ENCODE measurements at regions of chr1 and their contacts with region 1.

Region 1: DNA sequence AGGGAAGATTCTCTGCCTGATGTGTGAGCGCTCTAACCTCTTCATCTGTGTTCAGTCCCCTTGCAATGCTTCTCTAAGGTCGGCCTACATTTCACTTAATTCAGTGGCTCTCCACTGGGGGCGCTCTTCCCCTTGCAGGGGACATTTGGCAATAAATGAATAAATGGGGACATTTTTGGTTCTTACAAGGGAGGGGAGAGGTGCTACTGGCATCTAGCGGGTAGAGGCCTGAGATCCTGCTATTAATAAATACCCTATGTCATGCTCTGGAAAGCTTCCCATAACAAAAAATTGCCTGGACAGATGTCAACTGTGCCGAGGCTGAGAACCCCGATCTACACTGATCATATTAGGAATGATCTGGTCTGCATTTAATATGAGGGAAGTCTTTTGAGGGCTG is 25.9 kb upstream of the DNAJC11 start:
- DNase-seq: peak; percentile 56
- ATAC-seq: peak; percentile 59 to 80
- H3K4me3 ChIP-seq: no peak overlapping the region
- H3K27ac ChIP-seq: no peak overlapping the region
- H3K4me1 ChIP-seq: no peaks in the 10 kb centered on the region
- H3K27me3 ChIP-seq: no peaks in the 10 kb centered on the region
- CTCF ChIP-seq: peak; percentile 82

Region 2: DNA sequence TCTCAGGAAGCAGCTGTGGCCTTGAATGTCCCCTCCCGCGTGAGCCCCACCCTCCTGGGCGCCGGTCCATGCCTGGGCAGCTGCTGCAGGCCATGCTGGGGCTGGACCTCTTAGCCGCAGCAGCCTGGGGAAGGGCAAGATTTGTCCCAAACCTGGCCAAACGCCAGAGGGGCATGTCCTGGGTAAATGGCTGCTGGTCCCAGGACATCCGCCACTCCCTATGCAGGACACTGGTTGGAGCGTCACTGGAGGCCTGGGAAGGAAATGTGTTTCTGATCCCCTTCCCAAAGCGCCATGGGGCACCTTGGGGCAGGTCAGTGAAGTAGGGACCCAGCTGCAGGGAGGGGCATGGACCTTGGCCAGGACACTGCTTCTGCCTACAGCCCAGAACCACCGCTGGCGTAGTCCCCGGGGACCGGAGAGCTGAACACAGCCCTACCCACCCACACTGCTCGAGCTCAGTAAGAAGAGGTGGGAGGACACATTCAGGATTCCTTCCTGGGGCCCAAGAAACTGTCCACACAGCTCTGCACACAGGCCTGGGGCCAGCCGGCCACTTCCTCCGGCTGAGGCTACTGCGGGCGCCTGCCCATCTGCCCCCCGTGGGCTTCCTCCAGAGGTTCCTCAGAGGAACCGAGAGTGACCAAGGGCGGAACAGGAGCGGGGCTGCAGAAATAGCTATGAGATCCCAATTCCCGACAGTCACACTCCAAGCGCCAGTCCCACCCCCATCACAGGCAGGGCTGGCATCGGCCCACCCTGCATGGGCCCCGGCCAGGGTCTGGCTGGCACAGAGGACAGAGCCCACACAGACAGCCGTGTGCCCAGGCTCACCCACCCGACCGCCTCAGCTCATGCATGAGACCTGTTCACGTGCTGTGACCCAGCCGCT is 225.3 kb before region 1 on chr1:
- intact Hi-C with region 1: no loop called
- DNase-seq: no peak
- ATAC-seq: peak in 1 of 2 donors; percentile 23
- H3K4me3 ChIP-seq: no peak overlapping the region
- H3K27ac ChIP-seq: peak overlapping the region; percentile 18
- H3K4me1 ChIP-seq: peaks cover 23% of the 10 kb centered on the region
- H3K27me3 ChIP-seq: peaks cover 9% of the 10 kb centered on the region
- CTCF ChIP-seq: no peak

Region 3: DNA sequence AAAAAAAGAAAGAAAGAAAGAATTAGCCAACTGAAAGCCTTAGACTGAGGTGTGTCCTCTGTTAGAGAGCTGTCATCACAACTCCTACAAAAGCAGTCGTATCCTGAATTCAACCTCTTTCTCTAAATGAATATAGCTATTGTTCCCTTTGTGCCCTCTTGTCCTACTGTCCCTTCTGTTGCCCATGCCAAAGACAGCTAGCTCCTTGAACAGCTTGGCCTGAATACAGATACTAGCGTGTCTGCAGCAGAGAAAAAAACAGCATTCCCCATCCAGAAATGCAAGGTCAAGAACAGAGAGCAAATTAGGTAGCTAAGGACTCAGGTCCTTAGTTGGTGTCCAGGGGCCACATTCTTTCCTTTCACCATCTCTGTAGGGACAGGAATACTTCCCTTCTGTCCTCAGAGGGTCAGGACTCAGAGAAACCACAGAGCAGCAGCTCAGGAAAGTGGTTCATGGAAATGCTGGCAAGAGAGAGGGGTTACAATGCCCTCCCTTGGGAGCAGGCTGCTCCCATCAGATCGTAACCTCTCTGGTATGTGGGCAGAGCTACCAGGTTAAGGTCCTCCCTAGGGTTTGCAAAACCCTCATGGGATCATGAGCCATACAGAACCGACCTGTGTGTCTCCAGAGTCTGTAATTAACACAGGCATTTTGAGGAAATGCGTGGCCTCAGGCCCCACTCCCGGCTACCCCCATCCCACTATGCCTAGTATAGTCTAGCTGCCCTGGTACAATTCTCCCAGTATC is 149.5 kb before region 1 on chr1:
- intact Hi-C with region 1: no loop called
- DNase-seq: no peak
- ATAC-seq: no peak
- H3K4me3 ChIP-seq: no peak overlapping the region
- H3K27ac ChIP-seq: no peak overlapping the region
- H3K4me1 ChIP-seq: peaks cover 38% of the 10 kb centered on the region
- H3K27me3 ChIP-seq: no peaks in the 10 kb centered on the region
- CTCF ChIP-seq: no peak

Region 4: DNA sequence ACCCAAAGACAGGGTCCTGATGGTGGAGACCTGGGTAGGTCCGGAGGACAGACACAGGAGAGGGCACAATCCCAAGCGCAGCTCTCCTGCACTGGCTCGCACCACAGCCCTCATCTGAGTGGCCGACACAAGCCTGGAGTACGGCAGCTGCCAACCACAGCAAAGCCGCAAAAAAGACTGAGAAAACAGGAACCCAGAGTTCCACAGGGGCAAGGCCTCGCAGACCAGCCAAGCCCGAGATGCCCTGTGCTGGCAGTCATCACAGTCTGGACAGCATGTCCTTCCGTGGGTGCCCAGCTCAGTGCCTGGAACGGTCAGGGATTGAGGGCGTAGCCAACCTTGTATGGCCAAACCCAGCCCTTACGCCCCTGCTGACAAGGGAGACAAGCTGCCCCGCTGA is 136.3 kb before region 1 on chr1:
- intact Hi-C with region 1: no loop called
- DNase-seq: peak; percentile 59
- ATAC-seq: peak in 1 of 2 donors; percentile 33
- H3K4me3 ChIP-seq: no peak overlapping the region
- H3K27ac ChIP-seq: no peak overlapping the region
- H3K4me1 ChIP-seq: peaks cover 34% of the 10 kb centered on the region
- H3K27me3 ChIP-seq: no peaks in the 10 kb centered on the region
- CTCF ChIP-seq: no peak

Region 5: DNA sequence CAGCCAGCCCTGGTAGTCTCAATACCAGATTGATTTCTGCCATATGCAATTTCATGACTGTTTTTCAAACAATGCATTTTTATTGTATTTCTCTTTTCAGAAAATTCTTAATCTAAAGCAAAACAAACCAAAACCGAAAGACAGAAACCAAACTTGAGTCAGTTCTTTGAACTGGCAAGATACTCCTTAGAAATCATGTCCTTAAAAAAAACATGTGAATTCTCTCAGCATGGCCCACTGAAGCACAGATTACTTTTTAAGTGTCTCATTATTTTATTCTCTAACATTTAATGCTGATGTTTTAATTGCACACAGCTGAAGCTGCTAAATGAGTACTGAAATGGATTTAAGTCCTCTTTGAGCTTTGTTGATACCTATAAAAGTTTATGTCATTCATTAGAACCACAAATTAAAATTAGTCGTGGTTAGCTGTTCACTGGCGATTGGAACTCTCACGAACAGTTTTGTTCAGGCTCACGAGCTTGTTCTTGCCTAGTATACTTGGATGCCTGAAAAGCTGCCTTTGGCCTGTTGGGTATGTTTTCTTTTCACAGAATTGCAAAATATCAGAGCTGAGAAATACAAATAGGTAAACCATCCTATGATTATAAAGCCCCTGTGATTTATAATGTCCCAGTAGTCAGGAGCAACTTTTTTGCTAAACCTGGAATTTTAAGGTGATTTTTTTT is 145.2 kb after region 1 on chr1:
- intact Hi-C with region 1: no loop called
- DNase-seq: no peak
- ATAC-seq: no peak
- H3K4me3 ChIP-seq: no peak overlapping the region
- H3K27ac ChIP-seq: no peak overlapping the region
- H3K4me1 ChIP-seq: peaks cover 18% of the 10 kb centered on the region
- H3K27me3 ChIP-seq: no peaks in the 10 kb centered on the region
- CTCF ChIP-seq: no peak

Region 6: DNA sequence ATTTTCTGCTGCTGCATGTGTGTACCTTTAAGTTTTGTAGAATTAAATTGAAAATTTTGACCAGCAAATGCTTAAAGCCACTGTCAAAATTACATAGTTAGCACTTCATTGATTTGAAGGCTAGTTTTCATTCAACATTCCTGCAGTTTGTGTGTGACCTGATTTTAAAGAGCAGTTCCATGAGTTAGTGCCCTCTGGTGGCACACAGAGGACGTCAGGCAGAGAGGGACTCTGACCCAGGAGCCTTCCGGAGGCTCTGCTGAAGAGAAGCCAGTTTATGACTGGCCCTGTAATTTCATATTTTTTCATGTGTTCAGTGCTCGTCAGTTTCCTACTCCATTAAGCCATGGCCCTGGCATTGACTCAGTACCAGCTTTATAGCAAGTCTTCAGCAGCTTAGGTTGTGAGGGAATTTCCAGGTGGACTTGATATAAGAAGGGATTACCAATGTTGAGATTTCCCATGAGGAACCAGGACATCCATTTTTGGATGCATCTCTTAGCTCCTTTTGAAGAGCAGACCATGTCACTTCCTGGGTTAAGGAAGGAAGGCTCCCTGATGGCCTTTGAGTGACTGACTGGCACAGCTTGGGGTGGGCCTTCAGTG is 162.4 kb after region 1 on chr1:
- intact Hi-C with region 1: loop called (anchors 10 kb)
- DNase-seq: peak; percentile 54
- ATAC-seq: peak; percentile 82 to 83
- H3K4me3 ChIP-seq: no peak overlapping the region
- H3K27ac ChIP-seq: no peak overlapping the region
- H3K4me1 ChIP-seq: peaks cover 9% of the 10 kb centered on the region
- H3K27me3 ChIP-seq: no peaks in the 10 kb centered on the region
- CTCF ChIP-seq: peak; percentile 81

Measured in lower lobe of right lung (tissue), 2 donors.